Colonic mucosa (tissue), 4 donors: ENCODE measurements at regions of chr9 and their contacts with region 1.

Region 1: DNA sequence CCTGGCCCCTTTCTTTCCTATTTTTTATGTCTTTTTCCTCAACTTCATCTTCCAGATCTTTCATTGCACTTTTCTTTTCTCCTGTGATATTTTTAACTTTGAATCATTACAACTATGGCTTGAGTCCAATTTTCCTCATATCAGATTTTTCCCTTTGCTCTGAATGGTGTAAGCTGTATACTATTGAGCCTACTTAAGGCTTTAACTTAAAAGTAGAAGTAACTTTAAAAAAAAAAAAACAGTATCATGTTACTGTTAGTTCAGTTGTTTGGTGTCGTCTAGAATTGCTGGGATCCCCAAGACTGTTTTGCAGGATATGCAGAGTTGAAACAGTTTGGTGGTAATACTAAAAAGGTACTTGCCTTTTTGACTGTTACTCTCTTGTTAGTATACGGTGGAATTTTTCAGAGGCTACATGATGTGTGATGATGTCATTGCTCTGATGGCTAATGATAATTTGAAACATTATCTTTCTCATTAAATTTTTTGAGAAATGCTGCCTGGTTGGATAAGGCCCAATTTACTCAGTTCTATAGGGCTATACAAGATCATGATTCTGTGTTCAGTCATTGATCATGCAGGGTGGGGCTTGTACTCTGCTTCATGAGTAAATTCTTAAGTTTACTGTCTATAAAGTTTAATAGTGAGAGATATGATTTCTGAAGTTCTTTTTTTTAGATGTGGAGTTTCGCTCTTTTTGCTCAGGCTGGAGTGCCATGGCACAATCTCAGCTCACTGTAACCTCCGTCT is 8.8 kb downstream of the NAA35 start:
- DNase-seq: no peak
- H3K4me3 ChIP-seq: no peak overlapping the region
- H3K27ac ChIP-seq: no peak overlapping the region
- H3K4me1 ChIP-seq: no peaks in the 10 kb centered on the region
- H3K27me3 ChIP-seq: no peaks in the 10 kb centered on the region
- CTCF ChIP-seq: no peak

Region 2: DNA sequence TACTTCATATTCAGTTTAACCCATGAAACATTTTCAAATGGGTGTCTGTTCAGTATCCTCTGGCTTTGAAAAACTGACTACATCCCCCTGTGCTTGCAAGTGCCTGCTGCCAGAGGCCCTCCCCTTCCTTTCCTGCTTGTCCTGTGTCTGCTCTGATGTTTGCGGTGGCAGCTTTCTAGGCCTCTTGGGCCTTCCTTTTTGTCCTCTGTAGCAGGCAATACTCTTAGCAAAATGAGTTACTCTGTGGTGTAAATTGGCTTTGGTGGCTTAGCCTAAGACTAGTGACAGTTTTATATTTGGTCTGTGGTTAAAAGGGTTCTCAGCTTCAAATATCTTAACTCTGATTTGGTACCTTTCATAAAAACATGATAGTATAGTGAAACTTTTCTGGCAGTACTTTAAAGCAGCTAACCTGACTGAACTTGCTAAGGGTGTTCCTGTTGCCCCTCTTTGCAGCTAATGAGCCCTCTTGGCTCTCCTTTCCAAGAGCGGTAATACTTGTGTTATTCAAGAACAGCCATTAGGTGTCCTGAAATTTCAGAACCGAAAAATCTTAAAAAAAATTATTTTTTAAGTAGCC is 73.0 kb after region 1 on chr9:
- intact Hi-C with region 1: loop called (anchors 10 kb)
- DNase-seq: no peak
- H3K4me3 ChIP-seq: no peak overlapping the region
- H3K27ac ChIP-seq: no peak overlapping the region
- H3K4me1 ChIP-seq: no peaks in the 10 kb centered on the region
- H3K27me3 ChIP-seq: no peaks in the 10 kb centered on the region
- CTCF ChIP-seq: no peak

Region 3: DNA sequence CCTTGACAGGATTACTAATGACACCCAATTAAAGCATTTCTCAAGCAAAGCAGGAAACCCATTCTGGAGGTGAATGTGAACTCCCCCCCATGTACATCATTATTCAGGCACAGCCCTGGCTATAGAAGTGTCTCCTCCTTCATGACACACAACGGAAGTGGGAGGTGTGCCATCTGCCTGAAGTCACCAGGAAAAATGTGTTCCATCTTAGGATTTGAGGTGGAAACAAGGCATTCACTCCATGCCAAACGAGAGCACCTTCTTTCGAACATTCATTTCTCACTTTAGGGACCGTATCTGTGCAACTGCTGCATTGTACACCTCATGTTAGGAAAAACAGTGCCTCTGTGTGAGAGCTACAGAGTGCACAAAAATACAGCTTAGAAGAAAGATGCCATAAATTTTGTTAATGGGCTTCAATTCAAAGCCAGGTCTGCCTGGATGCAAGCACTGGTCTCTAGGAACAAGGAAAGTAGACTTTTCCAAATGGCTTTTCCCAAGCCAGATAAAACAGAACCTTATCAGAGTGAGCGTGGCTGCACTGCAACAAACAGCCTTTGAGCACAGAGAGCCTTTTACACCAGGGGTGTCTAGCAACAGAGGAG is 130.2 kb after region 1 on chr9:
- intact Hi-C with region 1: no loop called
- DNase-seq: no peak
- H3K4me3 ChIP-seq: no peak overlapping the region
- H3K27ac ChIP-seq: no peak overlapping the region
- H3K4me1 ChIP-seq: no peaks in the 10 kb centered on the region
- H3K27me3 ChIP-seq: no peaks in the 10 kb centered on the region
- CTCF ChIP-seq: no peak